H1 (cell line): ENCODE measurements at regions of chr5 and their contacts with region 1.

Region 1: GRCh38 chr5:17189381-17190036 is 27.9 kb upstream of the BASP1 start:
- DNase-seq: peak; percentile 66 to 93
- H3K4me3 ChIP-seq: no peak overlapping the region
- H3K27ac ChIP-seq: no peak overlapping the region
- H3K4me1 ChIP-seq: peaks cover 0 to 8% (median 2%) of the 10 kb centered on the region in 4 experiments; a peak in 4 of 7 replicates
- H3K27me3 ChIP-seq: no peaks in the 10 kb centered on the region
- CTCF ChIP-seq: peak; percentile 12 to 86 (median 79)
- EP300 ChIP-seq: no peak
- POLR2A ChIP-seq: no peak
- RAD21 ChIP-seq: peak; percentile 83 to 90

Region 2: GRCh38 chr5:16784843-16785791 is 404.4 kb before region 1 on chr5:
- CTCF ChIA-PET with region 1: interaction called, 34 read pairs
- POLR2A ChIA-PET with region 1: no interaction called
- DNase-seq: no peak
- H3K4me3 ChIP-seq: no peak overlapping the region
- H3K27ac ChIP-seq: no peak overlapping the region
- H3K4me1 ChIP-seq: no peaks in the 10 kb centered on the region
- H3K27me3 ChIP-seq: no peaks in the 10 kb centered on the region
- CTCF ChIP-seq: no peak
- EP300 ChIP-seq: no peak
- POLR2A ChIP-seq: no peak
- RAD21 ChIP-seq: no peak

Region 3: GRCh38 chr5:16806711-16807546 is 382.6 kb before region 1 on chr5:
- CTCF ChIA-PET with region 1: interaction called, 16 read pairs
- POLR2A ChIA-PET with region 1: no interaction called
- DNase-seq: no peak
- H3K4me3 ChIP-seq: no peak overlapping the region
- H3K27ac ChIP-seq: no peak overlapping the region
- H3K4me1 ChIP-seq: no peaks in the 10 kb centered on the region
- H3K27me3 ChIP-seq: no peaks in the 10 kb centered on the region
- CTCF ChIP-seq: no peak
- EP300 ChIP-seq: no peak
- POLR2A ChIP-seq: no peak
- RAD21 ChIP-seq: no peak

Region 4: GRCh38 chr5:16842896-16843295 is 346.6 kb before region 1 on chr5:
- CTCF ChIA-PET with region 1: interaction called, 27 read pairs
- POLR2A ChIA-PET with region 1: no interaction called
- DNase-seq: no peak
- H3K4me3 ChIP-seq: no peak overlapping the region
- H3K27ac ChIP-seq: no peak overlapping the region
- H3K4me1 ChIP-seq: no peaks in the 10 kb centered on the region
- H3K27me3 ChIP-seq: no peaks in the 10 kb centered on the region
- CTCF ChIP-seq: no peak
- EP300 ChIP-seq: no peak
- POLR2A ChIP-seq: no peak
- RAD21 ChIP-seq: no peak

Region 5: GRCh38 chr5:17132444-17133083 is 56.9 kb before region 1 on chr5:
- CTCF ChIA-PET with region 1: interaction called, 50 read pairs
- POLR2A ChIA-PET with region 1: no interaction called
- DNase-seq: no peak
- H3K4me3 ChIP-seq: peak overlapping the region in 1 of 4 experiments; percentile 6; a peak in 1 of 8 replicates
- H3K27ac ChIP-seq: no peak overlapping the region
- H3K4me1 ChIP-seq: peaks cover 0 to 5% (median 1%) of the 10 kb centered on the region in 4 experiments; a peak in 2 of 7 replicates
- H3K27me3 ChIP-seq: no peaks in the 10 kb centered on the region
- CTCF ChIP-seq: peak in 2 of 3 experiments; percentile 24 to 49; a peak in 2 of 4 replicates
- EP300 ChIP-seq: no peak
- POLR2A ChIP-seq: no peak
- RAD21 ChIP-seq: peak; percentile 39 to 48; a peak in 3 of 4 replicates

Region 6: GRCh38 chr5:17216176-17216973 is 26.9 kb after region 1 on chr5:
- CTCF ChIA-PET with region 1: interaction called, 16 read pairs
- POLR2A ChIA-PET with region 1: interaction called, 3 read pairs
- DNase-seq: peak; percentile 63 to 84
- H3K4me3 ChIP-seq: peak overlapping the region; percentile 55 to 97 (median 80)
- H3K27ac ChIP-seq: no peak overlapping the region
- H3K4me1 ChIP-seq: peaks cover 2 to 11% (median 9%) of the 10 kb centered on the region in 4 experiments; a peak in 4 of 7 replicates
- H3K27me3 ChIP-seq: no peaks in the 10 kb centered on the region
- CTCF ChIP-seq: peak; percentile 65 to 88 (median 70)
- EP300 ChIP-seq: no peak
- POLR2A ChIP-seq: no peak
- RAD21 ChIP-seq: peak; percentile 93 to 94